Activated CD4-positive, alpha-beta T cell treated with anti-CD3 and anti-CD28 coated beads, Interleukin-2, amount 10 ng/mL, durations not matched to agents 24 days and 14 days (primary cell): ENCODE measurements at regions of chr1 and their contacts with region 1.

Region 1: DNA sequence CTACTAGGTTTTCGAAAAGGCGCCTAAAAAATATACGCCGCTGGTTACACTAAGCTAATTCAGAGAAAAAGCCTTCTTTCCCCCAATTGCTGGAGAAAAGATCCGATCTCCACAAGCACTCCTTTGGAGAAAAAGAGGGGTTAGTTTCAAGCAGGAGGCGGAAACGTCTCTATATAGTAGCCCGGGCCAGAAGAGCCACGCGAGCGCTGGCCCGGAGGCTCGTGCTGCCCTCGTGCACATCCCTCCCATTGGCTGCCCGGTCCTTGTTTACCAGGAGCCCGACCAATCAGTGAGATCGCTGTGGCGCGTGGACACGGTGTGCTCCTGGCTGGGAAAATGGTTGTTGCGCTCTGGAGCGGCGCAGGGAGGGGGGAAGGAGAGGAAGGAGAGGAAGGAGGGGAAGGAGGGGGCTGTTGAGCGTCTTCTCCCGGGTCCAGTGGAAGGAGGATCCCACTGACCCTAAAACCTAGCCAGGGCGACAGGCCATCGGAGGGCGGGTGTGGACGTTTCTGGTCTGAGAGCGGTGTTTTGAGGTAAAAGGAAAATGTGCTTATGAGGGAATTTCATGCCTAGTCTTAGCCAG is at the start of gene TXNIP:
- DNase-seq: peak; percentile 98
- H3K4me3 Mint-ChIP-seq: peak within 1 kb of the TSS; percentile 93
- H3K27ac Mint-ChIP-seq: peak within 1 kb of the TSS; percentile 98
- H3K4me1 Mint-ChIP-seq: peaks cover 68% of the 10 kb centered on the region
- H3K27me3 Mint-ChIP-seq: no peaks in the 10 kb centered on the region
- total RNA-seq, gene TXNIP: 83.4 and 85.2 TPM in 2 replicates

Region 2: DNA sequence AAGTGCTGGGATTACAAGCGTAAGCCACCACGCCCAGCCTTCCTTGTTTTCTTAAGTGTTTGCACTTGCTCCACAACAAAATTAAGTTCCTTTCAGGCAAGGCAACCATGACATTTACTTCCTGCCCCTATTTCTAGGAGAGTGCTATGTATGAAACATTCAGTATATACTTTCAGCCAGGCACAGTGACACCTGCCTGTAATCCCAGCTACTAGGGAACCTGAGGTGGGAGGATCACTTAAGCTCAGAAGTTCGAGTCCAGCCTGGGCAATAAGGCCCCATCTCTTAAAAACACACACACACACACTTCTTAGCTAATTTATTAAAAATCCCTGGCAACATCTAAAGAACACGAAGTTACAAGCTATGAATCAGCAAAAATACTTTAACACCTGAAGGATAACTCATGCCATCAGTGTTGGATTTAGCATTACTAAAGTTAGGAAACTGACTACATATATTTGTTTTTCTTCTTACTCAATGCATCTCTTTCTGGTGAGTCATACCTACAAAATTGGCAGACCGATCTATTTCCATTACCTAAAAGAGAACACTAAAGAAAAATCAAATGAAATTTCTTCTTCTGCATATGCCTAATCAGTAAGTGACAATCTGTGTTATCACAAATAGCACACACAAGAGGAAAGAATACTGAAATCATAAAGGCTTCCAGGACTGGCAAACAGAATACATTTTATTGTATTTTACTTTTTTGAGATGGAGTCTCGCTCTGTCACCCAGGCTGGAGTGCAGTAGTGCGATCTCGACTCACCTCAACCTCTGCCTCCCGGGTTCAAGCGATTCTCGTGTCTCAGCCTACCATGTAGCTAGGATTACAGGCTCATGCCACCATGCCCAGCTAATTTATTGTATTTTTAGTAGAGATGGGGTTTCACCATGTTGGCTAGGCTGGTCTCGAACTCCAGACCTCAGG is 214.1 kb before region 1 on chr1:
- intact Hi-C with region 1: no loop called
- DNase-seq: no peak
- H3K4me3 Mint-ChIP-seq: no peak overlapping the region
- H3K27ac Mint-ChIP-seq: peak overlapping the region; percentile 38
- H3K4me1 Mint-ChIP-seq: peaks cover 24% of the 10 kb centered on the region
- H3K27me3 Mint-ChIP-seq: no peaks in the 10 kb centered on the region

Region 3: DNA sequence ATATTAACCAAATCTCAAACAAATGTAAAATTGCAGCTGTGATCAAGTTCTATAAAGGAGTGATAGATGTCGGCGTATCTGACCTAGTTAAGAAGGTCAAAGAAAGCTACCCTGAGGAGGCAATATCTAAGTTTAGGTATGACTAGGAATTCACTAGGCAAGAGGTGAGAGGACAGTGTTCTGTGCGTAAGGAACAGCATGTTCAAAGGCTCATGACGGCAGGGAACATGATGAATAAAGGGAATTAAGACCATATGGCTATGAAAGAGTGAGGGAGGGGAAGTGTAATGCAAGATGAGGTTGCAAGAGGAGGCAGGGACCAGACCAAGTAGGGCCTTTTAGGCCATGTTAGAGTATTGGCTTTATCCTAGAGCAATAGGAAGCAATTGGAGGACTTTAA is 47.3 kb before region 1 on chr1:
- intact Hi-C with region 1: no loop called
- DNase-seq: no peak
- H3K4me3 Mint-ChIP-seq: no peak overlapping the region
- H3K27ac Mint-ChIP-seq: no peak overlapping the region
- H3K4me1 Mint-ChIP-seq: peaks cover 21% of the 10 kb centered on the region
- H3K27me3 Mint-ChIP-seq: no peaks in the 10 kb centered on the region

Region 4: DNA sequence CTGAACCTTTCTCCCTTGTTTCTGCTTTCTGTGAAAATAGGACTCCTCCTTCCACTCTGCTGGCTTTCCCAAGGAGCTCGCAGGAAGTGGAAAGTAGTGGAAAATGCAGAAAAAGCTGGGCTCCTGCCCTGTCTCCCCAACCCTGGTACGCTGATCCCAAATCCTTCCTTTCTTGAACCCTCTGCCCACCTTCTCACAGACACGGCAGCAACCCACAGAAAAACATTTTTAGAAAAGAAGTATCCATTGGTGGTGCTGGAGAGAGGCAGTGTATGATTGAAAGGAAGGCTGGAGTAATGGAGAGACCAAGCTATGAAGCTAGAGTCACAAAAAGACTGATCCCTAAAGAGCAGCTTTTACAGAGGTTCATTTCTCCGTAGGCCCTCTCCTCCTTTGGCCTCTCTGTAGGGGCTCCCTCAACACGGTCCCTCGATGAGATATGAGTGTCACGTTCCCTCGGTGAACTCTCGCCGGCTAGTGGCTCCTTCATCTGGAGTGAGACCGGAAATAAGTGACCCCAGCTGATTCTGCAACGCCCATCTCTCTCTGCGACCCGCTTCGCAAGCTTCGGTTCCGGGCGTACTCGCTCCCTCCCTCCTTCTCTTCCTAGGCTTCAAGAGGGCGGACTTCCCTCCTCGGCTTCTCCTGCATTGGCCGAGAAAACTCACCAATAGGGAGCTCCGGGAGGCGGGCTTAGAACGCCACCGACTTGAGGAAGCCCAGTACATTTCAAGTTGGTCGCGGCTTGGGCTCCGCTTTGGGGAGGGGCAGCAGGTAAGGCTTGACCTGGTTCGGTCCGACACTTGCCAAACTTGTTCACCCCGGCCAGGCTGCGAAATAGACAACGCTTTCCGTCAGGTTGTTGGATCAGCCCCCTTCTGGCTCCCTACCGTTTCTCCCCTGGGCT is 32.3 kb before region 1 on chr1 and contains the starts of genes ANKRD34A and POLR3GL:
- intact Hi-C with region 1: loop called (anchors 1 kb)
- DNase-seq: peak; percentile 98
- H3K4me3 Mint-ChIP-seq: peak within 1 kb of the TSS; percentile 98
- H3K27ac Mint-ChIP-seq: peak within 1 kb of the TSS; percentile 93
- H3K4me1 Mint-ChIP-seq: peaks cover 37% of the 10 kb centered on the region
- H3K27me3 Mint-ChIP-seq: no peaks in the 10 kb centered on the region
- total RNA-seq, gene ANKRD34A: 4.8 and 5.2 TPM in 2 replicates
- total RNA-seq, gene POLR3GL: 12.1 and 12.6 TPM in 2 replicates

Region 5: GRCh38 chr1:146007506-146008133 is 11.1 kb after region 1 on chr1:
- intact Hi-C with region 1: loop called (anchors 1 kb)
- DNase-seq: no peak
- H3K4me3 Mint-ChIP-seq: peak overlapping the region; percentile 71
- H3K27ac Mint-ChIP-seq: peak overlapping the region; percentile 89
- H3K4me1 Mint-ChIP-seq: peaks cover 33% of the 10 kb centered on the region
- H3K27me3 Mint-ChIP-seq: no peaks in the 10 kb centered on the region

Region 6: GRCh38 chr1:146049436-146049835 is 52.9 kb after region 1 on chr1:
- intact Hi-C with region 1: loop called (anchors 2 kb)
- DNase-seq: peak; percentile 57
- H3K4me3 Mint-ChIP-seq: no peak overlapping the region
- H3K27ac Mint-ChIP-seq: no peak overlapping the region
- H3K4me1 Mint-ChIP-seq: peaks cover 21% of the 10 kb centered on the region
- H3K27me3 Mint-ChIP-seq: peaks cover 2% of the 10 kb centered on the region